ENCODE measurements at regions of chr1 and their contacts with region 1.

Region 1: GRCh38 chr1:100866041-100866900 is 28.4 kb downstream of the EXTL2 start:
- DNase-seq: no peak
- ATAC-seq: peak in 3 of 4 donors; percentile 77 to 80 (median 79)
- H3K4me3 ChIP-seq: no peak overlapping the region
- H3K27ac ChIP-seq: no peak overlapping the region
- H3K4me1 ChIP-seq: no peaks in the 10 kb centered on the region
- H3K27me3 ChIP-seq: no peaks in the 10 kb centered on the region
- CTCF ChIP-seq: peak in 3 of 4 donors; percentile 35 to 48 (median 36)

Region 2: GRCh38 chr1:99808391-99809115 is 1057.7 kb before region 1 on chr1:
- intact Hi-C with region 1: loop called in 1 of 3 experiments (anchors 10 kb)
- DNase-seq: peak in 2 of 6 donors; percentile 20 to 21
- ATAC-seq: peak; percentile 87 to 96 (median 93)
- H3K4me3 ChIP-seq: no peak overlapping the region
- H3K27ac ChIP-seq: no peak overlapping the region
- H3K4me1 ChIP-seq: no peaks in the 10 kb centered on the region
- H3K27me3 ChIP-seq: no peaks in the 10 kb centered on the region
- CTCF ChIP-seq: peak; percentile 41 to 57 (median 47)

Region 3: DNA sequence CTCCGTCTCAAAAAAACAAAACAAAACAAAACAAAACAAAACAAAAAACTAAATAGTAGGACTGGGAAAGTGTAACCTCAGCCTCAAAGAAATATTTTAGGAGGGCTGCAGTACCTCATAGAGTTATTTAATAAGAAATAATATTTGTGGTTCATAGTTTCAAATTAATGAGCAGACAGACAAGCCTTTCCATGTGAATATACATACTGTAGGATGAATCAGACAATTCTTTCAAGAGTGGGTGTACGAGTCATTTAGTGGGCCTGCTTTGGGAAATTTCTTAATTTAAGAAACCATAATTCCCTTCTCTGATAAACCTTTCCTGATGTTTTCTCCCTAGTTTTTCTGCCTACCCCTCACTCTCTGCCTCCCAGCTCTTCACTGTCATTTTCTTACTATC is 461.4 kb before region 1 on chr1:
- intact Hi-C with region 1: no loop called
- DNase-seq: no peak
- ATAC-seq: no peak
- H3K4me3 ChIP-seq: no peak overlapping the region
- H3K27ac ChIP-seq: no peak overlapping the region
- H3K4me1 ChIP-seq: peaks cover 0 to 3% (median 0%) of the 10 kb centered on the region in 3 donors
- H3K27me3 ChIP-seq: no peaks in the 10 kb centered on the region
- CTCF ChIP-seq: no peak

Region 4: GRCh38 chr1:100606438-100606837 is 259.8 kb before region 1 on chr1:
- intact Hi-C with region 1: loop called in 2 of 3 experiments (anchors 5 to 10 kb)
- DNase-seq: peak in 1 of 6 donors; percentile 52
- ATAC-seq: peak in 3 of 4 donors; percentile 84 to 90 (median 87)
- H3K4me3 ChIP-seq: no peak overlapping the region
- H3K27ac ChIP-seq: no peak overlapping the region
- H3K4me1 ChIP-seq: no peaks in the 10 kb centered on the region
- H3K27me3 ChIP-seq: no peaks in the 10 kb centered on the region
- CTCF ChIP-seq: peak; percentile 10 to 41 (median 34)

Measured in pancreas (tissue), 10 donors.